GM13977 (cell line): ENCODE measurements at regions of chr2 and their contacts with region 1.

Region 1: GRCh38 chr2:11583840-11584524 is 50.1 kb downstream of the GREB1 start:
- DNase-seq: peak; percentile 90
- CTCF ChIP-seq: peak; percentile 90

Region 2: DNA sequence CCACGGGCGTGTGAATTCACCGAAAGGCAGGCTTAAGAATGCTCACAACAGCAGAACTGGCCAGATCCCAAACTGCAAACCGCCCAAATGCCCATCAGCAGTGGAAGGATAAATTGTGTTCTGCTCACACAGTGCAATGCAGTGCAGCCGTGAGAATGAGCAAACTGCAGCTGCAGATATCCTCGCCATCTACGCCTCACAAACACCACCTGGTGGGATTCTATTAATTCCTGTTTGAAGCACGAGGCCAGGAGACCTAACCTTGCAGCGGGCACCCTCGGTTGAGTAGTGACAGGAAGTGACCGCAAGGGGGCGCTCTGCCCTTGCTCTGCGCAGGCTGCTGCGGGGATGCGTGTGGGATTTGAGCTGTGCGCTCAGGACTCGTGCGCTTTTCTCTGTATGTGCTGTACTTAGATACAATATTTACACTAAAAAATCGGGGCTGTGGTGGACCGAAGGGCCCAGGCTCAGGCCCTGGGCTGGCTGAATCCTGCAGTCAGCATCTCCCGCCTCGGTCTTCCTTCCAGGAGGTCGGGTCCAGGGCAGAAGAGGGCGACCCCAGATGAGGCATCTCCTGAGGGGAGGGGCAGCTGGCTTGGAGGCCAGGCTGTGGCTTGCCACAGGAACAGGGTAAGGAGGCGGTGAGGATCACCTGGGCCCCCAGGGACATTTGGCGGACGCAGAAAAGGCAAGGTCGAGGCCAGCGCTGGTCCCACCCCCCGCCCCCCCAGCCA is 751.6 kb before region 1 on chr2:
- in situ Hi-C with region 1: loop called (anchors 25 kb)
- DNase-seq: peak; percentile 90
- CTCF ChIP-seq: peak; percentile 98

Region 3: GRCh38 chr2:11124503-11125068 is 459.4 kb before region 1 on chr2:
- in situ Hi-C with region 1: loop called (anchors 25 kb)
- DNase-seq: peak; percentile 78
- CTCF ChIP-seq: peak; percentile 90

Region 4: DNA sequence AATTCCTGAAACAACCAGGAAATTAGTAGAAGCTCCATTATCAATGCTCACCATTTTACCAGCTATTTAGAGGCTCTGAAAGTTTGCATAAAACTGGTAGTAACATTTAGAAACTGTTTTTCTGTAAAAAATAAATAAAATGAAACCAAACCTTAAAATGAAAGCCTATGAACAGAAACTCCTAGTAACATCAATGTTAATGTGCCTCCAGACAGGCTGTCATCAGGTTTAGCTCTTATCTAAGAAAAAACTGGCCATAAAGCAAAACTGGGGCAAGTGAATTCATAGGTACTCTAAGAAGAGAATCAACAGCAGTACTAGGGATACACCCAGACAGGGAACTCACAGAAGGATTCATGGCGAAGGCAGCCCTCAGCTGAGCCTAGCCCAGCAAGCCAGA is 126.0 kb before region 1 on chr2:
- in situ Hi-C with region 1: no loop called
- DNase-seq: no peak
- CTCF ChIP-seq: no peak

Region 5: DNA sequence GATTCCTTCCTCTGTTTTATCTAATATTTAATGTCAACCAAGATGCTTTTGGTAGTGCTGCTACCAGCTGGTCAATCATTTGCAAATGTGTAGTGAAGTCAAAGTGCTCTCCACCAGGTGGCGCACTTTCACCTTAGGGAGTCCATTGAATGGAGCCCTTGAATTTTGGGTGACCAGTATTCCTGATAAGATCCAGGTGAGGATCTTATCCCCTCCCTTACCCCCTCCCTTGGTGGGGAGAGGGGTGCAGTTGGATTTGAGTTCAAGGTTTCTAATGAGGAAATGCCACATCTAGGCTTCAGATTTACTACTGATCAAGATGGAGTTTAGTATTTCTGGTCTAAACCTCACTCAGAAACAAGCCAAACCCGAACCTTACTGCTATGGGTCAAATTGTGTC is 106.0 kb before region 1 on chr2:
- in situ Hi-C with region 1: loop called (anchors 5 kb)
- DNase-seq: peak; percentile 72
- CTCF ChIP-seq: peak; percentile 86